ENCODE measurements at regions of chr1 and their contacts with region 1.

Region 1: DNA sequence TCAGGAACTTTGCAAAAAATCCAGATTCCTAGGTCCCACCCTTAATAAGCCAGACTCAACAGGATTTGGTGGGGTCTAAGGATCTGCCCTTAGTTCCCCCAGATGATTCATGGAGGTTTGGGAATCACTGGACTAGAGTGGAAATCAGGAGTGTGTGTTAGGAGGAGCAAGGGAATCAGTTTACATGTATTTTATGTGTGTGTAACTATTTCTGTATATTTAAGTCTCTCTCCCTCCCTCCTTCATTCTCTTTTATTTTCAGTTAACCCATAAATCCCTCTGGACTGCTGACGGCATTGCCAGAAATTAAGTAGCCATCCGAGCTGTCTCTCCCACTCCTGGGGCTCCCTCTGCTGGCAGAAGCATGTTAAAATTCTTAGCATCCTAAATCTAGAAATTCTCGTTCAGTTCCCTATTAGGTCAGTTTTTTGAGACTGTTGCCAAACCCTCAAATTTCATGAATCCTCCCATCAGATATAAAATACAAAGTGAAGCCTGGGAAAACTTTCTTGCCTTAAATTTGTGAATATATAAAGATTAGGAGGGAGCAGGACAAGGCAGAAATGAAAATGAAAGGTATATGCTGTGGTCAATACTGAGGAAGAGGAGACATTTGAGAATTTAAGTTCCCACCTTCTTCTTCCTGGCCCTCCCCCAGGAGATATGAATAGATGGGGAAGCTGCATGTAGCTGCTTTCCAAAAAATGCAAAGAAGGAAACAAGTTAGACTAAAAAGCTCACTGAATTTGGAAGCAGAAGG is 11.7 kb upstream of the HSD11B1 start:
- DNase-seq: peak; percentile 40 to 77 (median 66)
- ATAC-seq: peak; percentile 52
- H3K4me3 ChIP-seq: no peak overlapping the region
- H3K4me3 Mint-ChIP-seq: no peak overlapping the region
- H3K27ac ChIP-seq: no peak overlapping the region
- H3K27ac Mint-ChIP-seq: no peak overlapping the region
- H3K4me1 ChIP-seq: no peaks in the 10 kb centered on the region
- H3K4me1 Mint-ChIP-seq: peaks cover 10% of the 10 kb centered on the region
- H3K27me3 ChIP-seq: no peaks in the 10 kb centered on the region
- H3K27me3 Mint-ChIP-seq: no peaks in the 10 kb centered on the region
- CTCF ChIP-seq: peak; percentile 91

Region 2: GRCh38 chr1:208781391-208782045 is 911.4 kb before region 1 on chr1:
- CTCF ChIA-PET with region 1: no interaction called
- POLR2A ChIA-PET with region 1: no interaction called
- intact Hi-C with region 1: no loop called
- DNase-seq: no peak
- ATAC-seq: no peak
- H3K4me3 ChIP-seq: no peak overlapping the region
- H3K4me3 Mint-ChIP-seq: no peak overlapping the region
- H3K27ac ChIP-seq: no peak overlapping the region
- H3K27ac Mint-ChIP-seq: no peak overlapping the region
- H3K4me1 ChIP-seq: no peaks in the 10 kb centered on the region
- H3K4me1 Mint-ChIP-seq: no peaks in the 10 kb centered on the region
- H3K27me3 ChIP-seq: no peaks in the 10 kb centered on the region
- H3K27me3 Mint-ChIP-seq: peaks cover 4% of the 10 kb centered on the region
- CTCF ChIP-seq: no peak

Region 3: GRCh38 chr1:209576798-209577197 is 116.1 kb before region 1 on chr1:
- CTCF ChIA-PET with region 1: interaction called, 35 read pairs
- POLR2A ChIA-PET with region 1: no interaction called
- intact Hi-C with region 1: no loop called
- DNase-seq: peak; percentile 24 to 71 (median 63)
- ATAC-seq: peak; percentile 75
- H3K4me3 ChIP-seq: no peak overlapping the region
- H3K4me3 Mint-ChIP-seq: no peak overlapping the region
- H3K27ac ChIP-seq: no peak overlapping the region
- H3K27ac Mint-ChIP-seq: no peak overlapping the region
- H3K4me1 ChIP-seq: no peaks in the 10 kb centered on the region
- H3K4me1 Mint-ChIP-seq: no peaks in the 10 kb centered on the region
- H3K27me3 ChIP-seq: no peaks in the 10 kb centered on the region
- H3K27me3 Mint-ChIP-seq: peaks cover 8% of the 10 kb centered on the region
- CTCF ChIP-seq: peak; percentile 82

Region 4: DNA sequence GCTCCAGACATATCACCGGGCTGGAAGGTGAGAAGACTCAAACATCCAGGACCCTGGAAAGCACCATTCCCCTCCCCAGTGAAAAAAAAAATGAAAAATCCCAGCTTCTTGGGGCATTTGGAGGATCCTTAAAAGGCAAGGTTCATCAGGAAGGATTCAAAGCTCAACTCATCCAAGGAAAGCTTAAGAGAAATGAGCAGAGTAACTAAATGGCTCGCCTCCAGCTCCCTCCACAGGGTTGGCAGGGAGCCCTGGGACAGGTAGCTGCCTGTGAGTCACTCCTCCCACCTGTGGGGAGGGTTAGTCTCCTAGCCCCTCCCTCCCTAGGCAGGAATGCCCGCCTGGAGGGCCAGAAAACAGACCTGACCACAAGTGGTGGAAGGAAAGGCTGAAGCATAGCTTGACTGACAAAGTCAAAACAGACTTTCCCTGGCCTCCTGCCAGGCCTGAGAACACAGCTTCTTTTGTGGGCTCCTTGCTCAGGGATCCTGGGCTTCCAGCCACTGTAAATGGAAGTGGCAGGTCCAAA is 40.0 kb before region 1 on chr1:
- CTCF ChIA-PET with region 1: interaction called, 7 read pairs
- POLR2A ChIA-PET with region 1: no interaction called
- intact Hi-C with region 1: loop called in 1 of 2 experiments (anchors 2 kb)
- DNase-seq: no peak
- ATAC-seq: no peak
- H3K4me3 ChIP-seq: no peak overlapping the region
- H3K4me3 Mint-ChIP-seq: no peak overlapping the region
- H3K27ac ChIP-seq: no peak overlapping the region
- H3K27ac Mint-ChIP-seq: no peak overlapping the region
- H3K4me1 ChIP-seq: peaks cover 6% of the 10 kb centered on the region
- H3K4me1 Mint-ChIP-seq: peaks cover 4% of the 10 kb centered on the region
- H3K27me3 ChIP-seq: no peaks in the 10 kb centered on the region
- H3K27me3 Mint-ChIP-seq: no peaks in the 10 kb centered on the region
- CTCF ChIP-seq: no peak

Region 5: DNA sequence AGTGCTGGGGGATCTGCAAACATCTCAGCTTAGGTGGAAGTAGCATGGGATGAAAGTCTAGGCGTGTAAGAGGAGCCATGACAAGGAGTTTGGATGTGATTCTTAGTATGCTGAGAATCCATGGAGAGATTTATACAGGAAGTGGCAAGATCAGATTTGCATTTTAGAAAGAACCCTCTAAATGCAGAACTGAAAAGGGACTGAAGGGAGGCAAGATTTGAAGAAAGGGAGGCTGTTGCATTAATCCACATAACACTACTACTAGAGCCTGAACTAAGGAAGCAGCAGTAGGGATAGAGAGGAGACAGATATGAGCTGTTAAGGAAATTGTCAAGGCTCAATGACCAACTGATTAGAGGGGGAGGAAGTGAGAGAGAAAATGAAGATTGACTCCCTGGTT is 81.7 kb after region 1 on chr1:
- CTCF ChIA-PET with region 1: interaction called, 6 read pairs
- POLR2A ChIA-PET with region 1: interaction called, 3 read pairs
- intact Hi-C with region 1: loop called in 1 of 2 experiments (anchors 5 kb)
- DNase-seq: peak in 1 of 9 experiments; percentile 7
- ATAC-seq: no peak
- H3K4me3 ChIP-seq: no peak overlapping the region
- H3K4me3 Mint-ChIP-seq: peak overlapping the region; percentile 13
- H3K27ac ChIP-seq: peak overlapping the region in 1 of 2 experiments; percentile 49
- H3K27ac Mint-ChIP-seq: no peak overlapping the region
- H3K4me1 ChIP-seq: peaks cover 49% of the 10 kb centered on the region
- H3K4me1 Mint-ChIP-seq: peaks cover 46% of the 10 kb centered on the region
- H3K27me3 ChIP-seq: no peaks in the 10 kb centered on the region
- H3K27me3 Mint-ChIP-seq: no peaks in the 10 kb centered on the region
- CTCF ChIP-seq: no peak

Region 6: GRCh38 chr1:209797978-209798639 is 105.2 kb after region 1 on chr1:
- CTCF ChIA-PET with region 1: no interaction called
- POLR2A ChIA-PET with region 1: no interaction called
- intact Hi-C with region 1: no loop called
- DNase-seq: no peak
- ATAC-seq: no peak
- H3K4me3 ChIP-seq: no peak overlapping the region
- H3K4me3 Mint-ChIP-seq: no peak overlapping the region
- H3K27ac ChIP-seq: no peak overlapping the region
- H3K27ac Mint-ChIP-seq: no peak overlapping the region
- H3K4me1 ChIP-seq: no peaks in the 10 kb centered on the region
- H3K4me1 Mint-ChIP-seq: no peaks in the 10 kb centered on the region
- H3K27me3 ChIP-seq: no peaks in the 10 kb centered on the region
- H3K27me3 Mint-ChIP-seq: peaks cover 18% of the 10 kb centered on the region
- CTCF ChIP-seq: no peak

Region 7: DNA sequence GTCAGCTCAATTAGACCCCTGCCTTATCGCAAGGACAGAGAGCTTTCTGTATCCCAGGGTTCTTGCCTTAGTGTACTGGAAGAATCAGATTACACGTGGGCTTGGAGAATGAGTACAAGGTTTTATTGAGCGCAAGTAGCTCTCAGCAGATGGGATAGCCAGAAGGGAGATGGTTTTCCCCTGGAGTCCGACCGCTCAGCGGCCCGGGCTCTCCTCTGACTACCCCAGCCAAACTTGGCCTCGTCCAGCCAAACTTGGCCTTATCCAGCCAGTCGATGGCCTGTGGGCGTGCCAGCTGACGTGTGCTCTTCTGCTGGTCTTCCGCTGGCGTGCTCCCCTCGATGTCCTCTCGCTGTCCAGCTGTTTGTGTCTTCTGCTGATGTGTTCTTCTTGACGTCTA is 382.0 kb after region 1 on chr1:
- CTCF ChIA-PET with region 1: no interaction called
- POLR2A ChIA-PET with region 1: no interaction called
- intact Hi-C with region 1: no loop called
- DNase-seq: no peak
- ATAC-seq: no peak
- H3K4me3 ChIP-seq: no peak overlapping the region
- H3K4me3 Mint-ChIP-seq: no peak overlapping the region
- H3K27ac ChIP-seq: no peak overlapping the region
- H3K27ac Mint-ChIP-seq: no peak overlapping the region
- H3K4me1 ChIP-seq: no peaks in the 10 kb centered on the region
- H3K4me1 Mint-ChIP-seq: no peaks in the 10 kb centered on the region
- H3K27me3 ChIP-seq: no peaks in the 10 kb centered on the region
- H3K27me3 Mint-ChIP-seq: no peaks in the 10 kb centered on the region
- CTCF ChIP-seq: no peak

Measured in CD8-positive, alpha-beta T cell (primary cell).